AG04450 (cell line): ENCODE measurements at regions of chr11 and their contacts with region 1.

Region 1: DNA sequence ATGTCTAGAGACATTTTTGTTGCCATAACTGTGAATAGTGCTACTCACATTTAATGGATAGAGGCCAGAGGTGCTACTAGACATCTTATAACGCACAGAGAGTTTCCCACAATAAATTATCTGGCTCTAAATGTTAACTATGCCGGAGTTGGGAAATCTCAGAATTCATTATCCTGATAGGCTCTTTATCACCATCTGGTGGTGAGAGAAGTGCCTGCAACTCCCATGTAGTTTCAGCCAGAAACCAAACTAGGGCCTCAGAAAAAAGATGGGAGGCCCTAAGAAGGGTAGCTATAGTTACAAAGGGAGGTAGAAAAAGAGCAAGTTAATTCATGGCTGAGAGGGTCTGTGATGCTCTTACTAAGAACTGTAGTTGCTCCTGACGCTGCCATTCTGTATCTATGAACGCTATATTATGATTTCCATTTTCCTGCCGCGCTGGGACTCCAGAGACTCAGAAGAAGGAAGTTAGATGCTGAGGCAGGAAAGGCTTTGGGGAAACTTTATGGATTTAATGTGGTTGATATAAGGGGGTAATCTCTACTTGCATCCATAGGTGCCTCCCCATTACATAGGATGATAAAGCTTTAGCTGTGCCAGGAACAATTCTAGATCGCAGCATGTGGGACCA is 22.9 kb upstream of the MRPL17 start:
- DNase-seq: no peak
- H3K4me3 ChIP-seq: no peak overlapping the region
- H3K27ac ChIP-seq: no peak overlapping the region
- H3K27me3 ChIP-seq: no peaks in the 10 kb centered on the region
- CTCF ChIP-seq: peak; percentile 98

Region 2: GRCh38 chr11:6497069-6497839 is 208.8 kb before region 1 on chr11 and contains the start of gene DNHD1:
- CTCF ChIA-PET with region 1: interaction called, 11 read pairs
- POLR2A ChIA-PET with region 1: no interaction called
- DNase-seq: no peak
- H3K4me3 ChIP-seq: no peak within 1 kb of the TSS
- H3K27ac ChIP-seq: no peak within 1 kb of the TSS
- H3K27me3 ChIP-seq: no peaks in the 10 kb centered on the region
- CTCF ChIP-seq: no peak
- polyA plus RNA-seq, gene DNHD1: 2.2 and 3.1 TPM in 2 replicates

Region 3: DNA sequence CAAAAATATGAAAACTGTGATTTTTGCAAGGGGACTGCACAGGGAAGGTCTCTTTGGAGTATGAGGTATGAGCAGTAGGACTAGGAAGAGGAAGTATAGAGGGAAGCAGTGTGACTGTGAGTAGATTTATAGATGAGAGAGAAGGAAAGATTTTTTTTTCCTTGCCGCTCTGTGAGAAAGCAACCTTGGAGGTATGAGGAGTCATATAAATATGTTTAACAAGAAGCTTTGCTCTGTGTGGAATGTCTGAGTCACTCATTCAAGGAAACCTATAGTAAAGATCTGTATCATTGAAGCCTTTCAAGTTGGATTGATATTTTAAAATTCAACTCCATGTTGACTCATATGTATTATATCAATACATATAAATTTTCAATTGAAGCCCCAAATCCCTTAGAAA is 182.8 kb before region 1 on chr11:
- CTCF ChIA-PET with region 1: interaction called, 12 read pairs
- POLR2A ChIA-PET with region 1: no interaction called
- DNase-seq: no peak
- H3K4me3 ChIP-seq: no peak overlapping the region
- H3K27ac ChIP-seq: no peak overlapping the region
- H3K27me3 ChIP-seq: no peaks in the 10 kb centered on the region
- CTCF ChIP-seq: no peak

Region 4: GRCh38 chr11:6619004-6619745 is 86.8 kb before region 1 on chr11 and contains the start of gene TPP1:
- CTCF ChIA-PET with region 1: interaction called, 19 read pairs
- POLR2A ChIA-PET with region 1: no interaction called
- DNase-seq: peak; percentile 86
- H3K4me3 ChIP-seq: peak within 1 kb of the TSS; percentile 93
- H3K27ac ChIP-seq: peak within 1 kb of the TSS; percentile 73
- H3K27me3 ChIP-seq: peaks cover 2% of the 10 kb centered on the region
- CTCF ChIP-seq: no peak
- polyA plus RNA-seq, gene TPP1: 128 and 152 TPM in 2 replicates

Region 5: GRCh38 chr11:6737872-6738466 is 31.9 kb after region 1 on chr11:
- CTCF ChIA-PET with region 1: interaction called, 16 read pairs
- POLR2A ChIA-PET with region 1: no interaction called
- DNase-seq: no peak
- H3K4me3 ChIP-seq: no peak overlapping the region
- H3K27ac ChIP-seq: no peak overlapping the region
- H3K27me3 ChIP-seq: peaks cover 3% of the 10 kb centered on the region
- CTCF ChIP-seq: peak; percentile 74

Region 6: GRCh38 chr11:6757373-6757967 is 51.5 kb after region 1 on chr11:
- CTCF ChIA-PET with region 1: interaction called, 14 read pairs
- POLR2A ChIA-PET with region 1: no interaction called
- DNase-seq: peak; percentile 15
- H3K4me3 ChIP-seq: no peak overlapping the region
- H3K27ac ChIP-seq: no peak overlapping the region
- H3K27me3 ChIP-seq: no peaks in the 10 kb centered on the region
- CTCF ChIP-seq: peak; percentile 74

Region 7: GRCh38 chr11:6812390-6813005 is 106.5 kb after region 1 on chr11:
- CTCF ChIA-PET with region 1: no interaction called
- POLR2A ChIA-PET with region 1: no interaction called
- DNase-seq: no peak
- H3K4me3 ChIP-seq: no peak overlapping the region
- H3K27ac ChIP-seq: no peak overlapping the region
- H3K27me3 ChIP-seq: no peaks in the 10 kb centered on the region
- CTCF ChIP-seq: peak; percentile 98

Region 8: GRCh38 chr11:7046474-7047175 is 340.6 kb after region 1 on chr11:
- CTCF ChIA-PET with region 1: no interaction called
- POLR2A ChIA-PET with region 1: no interaction called
- DNase-seq: peak; percentile 37
- H3K4me3 ChIP-seq: no peak overlapping the region
- H3K27ac ChIP-seq: no peak overlapping the region
- H3K27me3 ChIP-seq: no peaks in the 10 kb centered on the region
- CTCF ChIP-seq: no peak